K562 (cell line): ENCODE measurements at regions of chr15 and their contacts with region 1.

Region 1: GRCh38 chr15:90201130-90201949 is at the start of gene SEMA4B:
- DNase-seq: peak; percentile 84 to 95 (median 92)
- ATAC-seq: peak; percentile 96
- H3K4me3 ChIP-seq: peak within 1 kb of the TSS; percentile 83
- H3K27ac ChIP-seq: peak within 1 kb of the TSS; percentile 63
- H3K4me1 ChIP-seq: peaks cover 26 to 33% of the 10 kb centered on the region in 2 experiments; a peak in 4 of 5 replicates
- H3K27me3 ChIP-seq: no peaks in the 10 kb centered on the region
- CTCF ChIP-seq: no peak
- EP300 ChIP-seq: no peak
- POLR2A ChIP-seq: peak; percentile 53; the same call in 1 of the 2 replicates
- RAD21 ChIP-seq: no peak
- polyA plus RNA-seq, gene SEMA4B: 1.3 to 1.5 TPM

Region 2: GRCh38 chr15:90184786-90185569 is 16.4 kb before region 1 on chr15:
- CTCF ChIA-PET with region 1: no interaction called
- POLR2A ChIA-PET with region 1: interaction called, 24 read pairs
- in situ Hi-C with region 1: no loop called
- intact Hi-C with region 1: loop called (anchors 2 kb)
- DNase-seq: peak; percentile 84 to 90 (median 88)
- ATAC-seq: peak; percentile 83
- H3K4me3 ChIP-seq: peak overlapping the region; percentile 77
- H3K27ac ChIP-seq: peak overlapping the region; percentile 97
- H3K4me1 ChIP-seq: peaks cover 42 to 43% of the 10 kb centered on the region in 2 experiments
- H3K27me3 ChIP-seq: no peaks in the 10 kb centered on the region
- CTCF ChIP-seq: peak in 2 of 3 experiments; percentile 2 to 8; a peak in 1 of 6 replicates
- EP300 ChIP-seq: no peak
- POLR2A ChIP-seq: no peak
- RAD21 ChIP-seq: no peak

Region 3: DNA sequence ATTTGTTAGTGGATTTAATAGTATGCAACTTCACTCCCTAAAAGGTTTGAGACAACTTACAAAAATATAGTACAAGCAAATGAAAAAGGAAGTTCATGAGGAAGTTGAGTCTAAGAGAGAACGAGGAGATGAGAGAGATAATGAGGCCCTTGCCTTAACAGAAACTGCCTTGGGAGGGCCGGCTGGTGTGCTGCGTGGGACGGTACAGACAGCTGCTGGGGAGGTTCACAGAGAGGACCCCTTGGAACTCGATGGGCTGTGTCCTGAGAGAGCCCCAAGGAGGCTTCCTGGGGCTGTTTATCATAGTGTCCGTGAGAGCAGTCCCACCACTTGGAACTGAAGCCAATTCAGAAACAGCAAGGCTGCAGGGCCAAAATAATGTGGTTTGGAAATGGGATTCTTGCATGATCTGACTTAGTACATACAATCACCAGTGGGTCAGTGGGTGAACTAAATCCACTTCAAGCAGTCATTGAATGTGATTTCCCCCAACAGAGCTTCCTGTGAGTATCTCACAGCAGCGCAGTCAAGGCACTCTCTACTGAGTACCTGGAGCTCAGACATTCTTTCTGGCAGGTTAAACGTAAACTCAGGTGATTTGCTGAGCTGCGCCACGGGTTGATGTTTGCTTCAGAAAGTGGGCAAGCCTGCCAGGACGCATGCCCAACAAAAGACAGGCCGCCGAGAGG is 419.2 kb after region 1 on chr15:
- CTCF ChIA-PET with region 1: no interaction called
- POLR2A ChIA-PET with region 1: no interaction called
- in situ Hi-C with region 1: no loop called
- intact Hi-C with region 1: no loop called
- DNase-seq: peak; percentile 24 to 79 (median 55)
- ATAC-seq: peak; percentile 87
- H3K4me3 ChIP-seq: no peak overlapping the region
- H3K27ac ChIP-seq: peak overlapping the region; percentile 46
- H3K4me1 ChIP-seq: peaks cover 16 to 35% of the 10 kb centered on the region in 2 experiments
- H3K27me3 ChIP-seq: no peaks in the 10 kb centered on the region
- CTCF ChIP-seq: no peak
- EP300 ChIP-seq: no peak; the same call in 1 of the 2 replicates
- POLR2A ChIP-seq: no peak
- RAD21 ChIP-seq: 0 out of 4 replicates have a peak, but pooled peaks of 1 of the 2 experiments have one; percentile 10